ENCODE measurements at regions of chr9 and their contacts with region 1.

Region 1: GRCh38 chr9:107172160-107172978 is 110.7 kb upstream of the RAD23B start:
- DNase-seq: peak; percentile 74
- ATAC-seq: peak; percentile 58

Region 2: DNA sequence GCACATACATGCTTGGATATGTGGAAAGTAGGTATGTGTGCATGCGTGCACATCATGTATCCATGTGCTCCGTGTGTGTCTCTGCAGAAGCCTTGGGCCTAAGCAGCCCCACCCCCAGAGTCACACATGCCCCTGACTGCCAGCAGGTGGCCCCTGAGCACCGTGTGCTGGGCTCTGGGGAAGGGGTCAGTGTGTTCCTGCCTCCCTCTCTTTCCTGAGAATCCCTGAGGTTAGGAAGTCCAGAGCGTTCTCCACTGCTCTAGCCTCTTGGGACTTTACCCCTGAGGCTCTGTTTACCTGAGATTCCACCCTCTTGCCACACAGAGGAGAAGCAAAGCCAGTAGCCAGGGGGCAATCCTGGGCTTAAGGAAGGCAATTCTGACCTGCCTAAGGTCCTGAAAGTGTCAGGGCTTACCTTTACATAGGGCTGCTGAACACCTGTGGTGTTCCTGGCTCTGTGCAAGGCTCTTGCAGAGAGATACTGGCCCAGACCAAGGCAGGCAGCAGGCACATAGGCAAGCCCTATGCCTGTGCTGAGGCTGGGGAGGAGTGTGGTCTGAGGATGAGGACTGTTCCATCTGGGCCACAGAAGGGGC is 1270.8 kb before region 1 on chr9:
- intact Hi-C with region 1: loop called (anchors 1 kb)
- DNase-seq: no peak
- ATAC-seq: peak; percentile 91

Region 3: GRCh38 chr9:106962615-106963363 is 209.6 kb before region 1 on chr9:
- intact Hi-C with region 1: loop called (anchors 10 kb)
- DNase-seq: no peak
- ATAC-seq: peak; percentile 68

Region 4: DNA sequence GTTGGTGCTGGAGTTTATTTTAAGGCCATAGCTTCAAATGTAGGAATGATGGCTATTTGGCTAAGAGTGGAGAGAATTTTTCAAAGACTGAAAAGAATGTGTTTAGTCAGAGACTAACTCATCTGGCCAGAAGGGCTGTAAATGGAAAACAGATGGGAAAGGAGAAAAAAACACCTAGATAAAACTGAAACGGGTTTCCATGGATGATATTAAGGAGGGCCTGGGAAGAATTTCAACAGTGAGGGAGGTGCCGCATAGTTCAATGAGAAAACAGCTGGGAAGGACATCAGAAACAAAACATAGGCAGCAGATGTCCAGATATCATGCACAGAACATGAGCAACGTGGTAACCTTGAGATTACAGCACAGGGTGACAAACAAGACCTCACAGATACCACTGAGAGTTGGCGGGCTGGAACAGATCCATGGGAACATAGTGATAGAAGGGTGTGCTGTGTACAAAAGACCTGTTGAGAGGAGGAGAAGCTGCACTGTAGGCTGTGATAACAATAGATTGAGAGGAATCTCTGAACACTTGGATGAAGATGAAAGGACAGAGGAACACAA is 79.5 kb after region 1 on chr9:
- intact Hi-C with region 1: loop called (anchors 5 kb)
- DNase-seq: no peak
- ATAC-seq: peak; percentile 97

Region 5: DNA sequence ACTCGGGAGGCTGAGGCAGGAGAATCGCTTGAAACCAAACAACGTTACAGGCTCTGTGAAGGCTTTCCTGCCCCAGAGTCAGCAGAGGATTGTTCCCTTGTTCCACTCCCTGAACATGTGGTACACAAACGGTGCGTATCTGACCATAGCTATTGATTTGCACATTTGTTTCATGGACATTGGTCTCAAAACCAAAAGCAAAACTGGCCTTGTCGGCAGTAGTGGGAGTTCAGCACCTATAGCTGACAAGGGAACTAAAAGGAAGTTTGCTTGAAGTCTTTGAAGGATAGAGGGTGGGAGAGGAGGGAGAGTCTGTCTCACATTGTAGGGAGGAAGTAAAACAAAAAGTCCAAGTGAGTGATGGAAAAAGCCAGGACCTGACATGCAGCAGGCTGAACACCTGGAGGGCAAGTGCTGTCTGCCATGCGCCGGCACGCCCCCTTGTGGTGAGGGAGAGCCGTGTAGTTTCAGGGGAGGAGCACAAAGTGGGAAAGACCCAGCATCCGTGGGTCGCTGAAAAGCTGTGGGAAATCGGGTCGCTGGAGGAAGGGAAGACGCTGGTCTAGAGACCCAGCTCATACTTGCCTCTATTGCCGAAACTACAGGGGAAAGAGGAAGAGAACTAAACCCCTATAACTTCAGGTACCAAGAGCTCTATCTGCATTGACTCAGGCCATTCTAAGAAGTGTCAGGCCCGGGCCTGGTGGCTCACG is 168.7 kb after region 1 on chr9:
- intact Hi-C with region 1: loop called (anchors 5 kb)
- DNase-seq: peak; percentile 90
- ATAC-seq: no peak

Measured in Right ventricle myocardium inferior (tissue), 1 donor.